PC-3 (cell line): ENCODE measurements at regions of chr6 and their contacts with region 1.

Region 1: GRCh38 chr6:19845266-19846041 is 8.3 kb downstream of the ID4 start:
- DNase-seq: peak; percentile 59
- ATAC-seq: peak; percentile 59; the same call in 1 of the 2 replicates
- H3K4me3 ChIP-seq: no peak overlapping the region
- H3K27ac ChIP-seq: peak overlapping the region; percentile 27; the same call in 1 of the 2 replicates
- H3K4me1 ChIP-seq: no peaks in the 10 kb centered on the region; the same call in 1 of the 2 replicates
- H3K27me3 ChIP-seq: no peaks in the 10 kb centered on the region
- CTCF ChIP-seq: no peak

Region 2: GRCh38 chr6:19554356-19555225 is 290.9 kb before region 1 on chr6:
- CTCF ChIA-PET with region 1: no interaction called
- POLR2A ChIA-PET with region 1: no interaction called
- intact Hi-C with region 1: loop called (anchors 10 kb)
- DNase-seq: no peak
- ATAC-seq: no peak
- H3K4me3 ChIP-seq: no peak overlapping the region
- H3K27ac ChIP-seq: no peak overlapping the region
- H3K4me1 ChIP-seq: no peaks in the 10 kb centered on the region
- H3K27me3 ChIP-seq: no peaks in the 10 kb centered on the region
- CTCF ChIP-seq: no peak